Colonic mucosa (tissue), 4 donors: ENCODE measurements at regions of chr3 and their contacts with region 1.

Region 1: DNA sequence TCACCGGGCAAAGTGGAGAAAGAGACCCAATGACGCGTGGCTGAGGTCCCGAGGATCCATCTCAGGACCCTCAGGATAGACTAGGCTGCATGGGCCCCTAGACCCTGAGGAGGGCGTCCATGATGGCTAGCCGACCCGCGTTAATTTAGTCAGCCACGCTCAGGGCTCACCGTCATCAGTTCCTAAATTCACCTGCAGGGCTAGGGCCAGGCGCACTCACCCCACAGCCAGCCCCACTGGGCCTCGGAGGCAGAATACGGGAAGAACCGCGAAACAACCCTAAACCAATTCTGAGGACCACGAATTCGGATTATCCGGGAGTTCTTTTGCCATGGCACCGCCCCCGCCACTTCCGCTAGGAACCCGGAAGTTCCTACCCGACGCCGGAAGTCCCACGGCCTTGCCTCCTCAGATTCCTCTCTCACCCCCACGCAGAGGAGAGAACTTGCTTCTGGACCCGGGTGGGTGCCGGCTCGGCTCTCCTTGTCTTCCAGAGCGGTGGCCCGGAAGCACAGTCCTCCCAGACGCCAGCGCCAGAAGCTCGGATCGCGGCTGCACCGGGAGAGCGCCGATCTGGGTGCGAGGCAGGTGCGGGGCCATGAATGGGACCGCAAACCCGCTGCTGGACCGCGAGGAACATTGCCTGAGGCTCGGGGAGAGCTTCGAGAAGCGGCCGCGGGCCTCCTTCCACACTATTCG is at the starts of genes EAF1 and METTL6:
- DNase-seq: peak; percentile 89
- H3K4me3 ChIP-seq: peak within 1 kb of the TSS; percentile 91
- H3K27ac ChIP-seq: peak within 1 kb of the TSS; percentile 80
- H3K4me1 ChIP-seq: peaks cover 6% of the 10 kb centered on the region
- H3K27me3 ChIP-seq: no peaks in the 10 kb centered on the region
- CTCF ChIP-seq: no peak
- total RNA-seq, gene EAF1: 24.9 to 28.0 TPM
- total RNA-seq, gene METTL6: 8.8 to 11.4 TPM

Region 2: GRCh38 chr3:14651440-14652251 is 775.7 kb before region 1 on chr3 and contains the start of gene CCDC174:
- intact Hi-C with region 1: loop called (anchors 10 kb)
- DNase-seq: peak; percentile 97
- H3K4me3 ChIP-seq: peak within 1 kb of the TSS; percentile 56
- H3K27ac ChIP-seq: peak within 1 kb of the TSS; percentile 76
- H3K4me1 ChIP-seq: peaks cover 16% of the 10 kb centered on the region
- H3K27me3 ChIP-seq: no peaks in the 10 kb centered on the region
- CTCF ChIP-seq: no peak
- total RNA-seq, gene CCDC174: 15.4 to 17.9 TPM